Gastrocnemius medialis (tissue), 4 donors: ENCODE measurements at regions of chr3 and their contacts with region 1.

Region 1: GRCh38 chr3:152258448-152259393 is 10.0 kb upstream of the MBNL1 start:
- DNase-seq: peak; percentile 68 to 75
- ATAC-seq: peak; percentile 91 to 97
- H3K4me3 ChIP-seq: peak overlapping the region in 3 of 4 donors; percentile 22 to 34 (median 28)
- H3K27ac ChIP-seq: peak overlapping the region; percentile 76 to 88 (median 80)
- H3K4me1 ChIP-seq: peaks cover 13 to 23% of the 10 kb centered on the region in 2 donors
- H3K27me3 ChIP-seq: no peaks in the 10 kb centered on the region
- CTCF ChIP-seq: peak in 1 of 5 experiments; percentile 19
- POLR2A ChIP-seq: no peak

Region 2: GRCh38 chr3:151971798-151972579 is 286.7 kb before region 1 on chr3:
- in situ Hi-C with region 1: no loop called
- intact Hi-C with region 1: no loop called
- DNase-seq: no peak
- ATAC-seq: no peak
- H3K4me3 ChIP-seq: no peak overlapping the region
- H3K27ac ChIP-seq: no peak overlapping the region
- H3K4me1 ChIP-seq: no peaks in the 10 kb centered on the region
- H3K27me3 ChIP-seq: no peaks in the 10 kb centered on the region
- CTCF ChIP-seq: no peak
- POLR2A ChIP-seq: no peak

Region 3: GRCh38 chr3:152222327-152222726 is 36.4 kb before region 1 on chr3:
- in situ Hi-C with region 1: no loop called
- intact Hi-C with region 1: loop called (anchors 5 kb)
- DNase-seq: no peak
- ATAC-seq: peak in 1 of 2 donors; percentile 37
- H3K4me3 ChIP-seq: no peak overlapping the region
- H3K27ac ChIP-seq: peak overlapping the region; percentile 34 to 58 (median 38)
- H3K4me1 ChIP-seq: peaks cover 33 to 35% of the 10 kb centered on the region in 2 donors
- H3K27me3 ChIP-seq: no peaks in the 10 kb centered on the region
- CTCF ChIP-seq: no peak
- POLR2A ChIP-seq: no peak

Region 4: DNA sequence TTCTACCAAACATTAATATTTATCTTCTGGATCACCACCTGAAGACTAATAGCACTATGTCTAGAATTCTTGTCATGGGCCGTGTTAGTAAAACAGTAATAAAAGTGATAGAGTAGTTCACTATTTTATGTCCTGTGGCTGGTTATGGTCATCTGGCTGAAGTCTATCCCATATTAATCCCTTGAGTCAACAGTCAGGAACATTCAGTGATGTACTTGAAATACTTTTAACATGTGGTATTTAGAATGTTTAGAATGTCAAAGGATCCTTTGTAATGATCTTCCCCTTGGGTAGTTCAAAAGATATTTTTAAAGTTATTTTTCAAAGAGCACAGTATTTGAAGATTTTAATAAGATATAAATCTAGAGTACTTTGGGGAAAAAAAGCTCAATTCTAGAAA is 127.0 kb after region 1 on chr3:
- in situ Hi-C with region 1: no loop called
- intact Hi-C with region 1: no loop called
- DNase-seq: no peak
- ATAC-seq: peak; percentile 41 to 70
- H3K4me3 ChIP-seq: peak overlapping the region; percentile 27 to 54 (median 38)
- H3K27ac ChIP-seq: peak overlapping the region; percentile 92 to 96 (median 94)
- H3K4me1 ChIP-seq: peaks cover 86 to 89% of the 10 kb centered on the region in 2 donors
- H3K27me3 ChIP-seq: no peaks in the 10 kb centered on the region
- CTCF ChIP-seq: no peak
- POLR2A ChIP-seq: no peak

Region 5: DNA sequence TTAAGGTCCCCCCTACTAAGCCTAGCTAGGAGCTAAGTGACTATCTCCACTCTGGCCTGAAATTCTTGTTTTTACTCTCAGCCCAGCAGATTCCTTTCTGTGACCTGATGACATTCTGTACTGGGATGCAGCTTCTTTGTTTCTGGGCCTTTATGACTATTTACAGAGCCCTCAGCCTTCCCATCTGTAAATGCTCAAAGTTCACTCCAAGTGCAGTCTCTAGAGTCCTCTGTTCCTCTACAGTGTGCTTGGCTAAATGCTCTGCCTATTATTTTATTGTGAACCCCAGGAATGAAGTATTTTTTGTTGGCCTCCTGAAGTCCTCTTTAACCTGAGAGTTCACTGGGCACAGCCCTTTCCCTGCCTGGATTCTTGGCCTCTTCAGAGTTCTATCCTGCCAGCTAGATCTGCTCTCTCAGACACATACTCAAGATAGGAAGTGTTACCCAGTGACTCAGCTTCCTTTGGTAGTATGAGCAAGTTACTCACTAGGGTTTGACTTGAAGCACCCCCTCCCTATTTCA is 298.1 kb after region 1 on chr3:
- in situ Hi-C with region 1: no loop called
- intact Hi-C with region 1: loop called (anchors 10 kb)
- DNase-seq: peak; percentile 22 to 54
- ATAC-seq: peak; percentile 79 to 95
- H3K4me3 ChIP-seq: no peak overlapping the region
- H3K27ac ChIP-seq: peak overlapping the region; percentile 68 to 82 (median 75)
- H3K4me1 ChIP-seq: peaks cover 33 to 35% of the 10 kb centered on the region in 2 donors
- H3K27me3 ChIP-seq: no peaks in the 10 kb centered on the region
- CTCF ChIP-seq: no peak
- POLR2A ChIP-seq: no peak